ENCODE measurements at regions of chr2 and their contacts with region 1.

Region 1: GRCh38 chr2:84925724-84926376 is 20.4 kb downstream of the TMSB10 start:
- DNase-seq: peak; percentile 93 to 94
- H3K4me3 ChIP-seq: peak overlapping the region; percentile 53
- H3K4me3 Mint-ChIP-seq: peak overlapping the region; percentile 70
- H3K27ac Mint-ChIP-seq: no peak overlapping the region
- H3K4me1 ChIP-seq: peaks cover 8% of the 10 kb centered on the region; the same call in 1 of the 2 replicates
- H3K4me1 Mint-ChIP-seq: peaks cover 11% of the 10 kb centered on the region
- H3K27me3 ChIP-seq: no peaks in the 10 kb centered on the region
- H3K27me3 Mint-ChIP-seq: no peaks in the 10 kb centered on the region
- CTCF ChIP-seq: peak; percentile 80 to 97

Region 2: GRCh38 chr2:84495539-84496146 is 430.2 kb before region 1 on chr2:
- CTCF ChIA-PET with region 1: no interaction called
- POLR2A ChIA-PET with region 1: no interaction called
- intact Hi-C with region 1: loop called (anchors 1 kb)
- DNase-seq: peak in 1 of 2 experiments; percentile 54
- H3K4me3 ChIP-seq: no peak overlapping the region
- H3K4me3 Mint-ChIP-seq: no peak overlapping the region
- H3K27ac Mint-ChIP-seq: no peak overlapping the region
- H3K4me1 ChIP-seq: no peaks in the 10 kb centered on the region
- H3K4me1 Mint-ChIP-seq: peaks cover 5% of the 10 kb centered on the region
- H3K27me3 ChIP-seq: no peaks in the 10 kb centered on the region
- H3K27me3 Mint-ChIP-seq: no peaks in the 10 kb centered on the region
- CTCF ChIP-seq: peak; percentile 54 to 73

Region 3: DNA sequence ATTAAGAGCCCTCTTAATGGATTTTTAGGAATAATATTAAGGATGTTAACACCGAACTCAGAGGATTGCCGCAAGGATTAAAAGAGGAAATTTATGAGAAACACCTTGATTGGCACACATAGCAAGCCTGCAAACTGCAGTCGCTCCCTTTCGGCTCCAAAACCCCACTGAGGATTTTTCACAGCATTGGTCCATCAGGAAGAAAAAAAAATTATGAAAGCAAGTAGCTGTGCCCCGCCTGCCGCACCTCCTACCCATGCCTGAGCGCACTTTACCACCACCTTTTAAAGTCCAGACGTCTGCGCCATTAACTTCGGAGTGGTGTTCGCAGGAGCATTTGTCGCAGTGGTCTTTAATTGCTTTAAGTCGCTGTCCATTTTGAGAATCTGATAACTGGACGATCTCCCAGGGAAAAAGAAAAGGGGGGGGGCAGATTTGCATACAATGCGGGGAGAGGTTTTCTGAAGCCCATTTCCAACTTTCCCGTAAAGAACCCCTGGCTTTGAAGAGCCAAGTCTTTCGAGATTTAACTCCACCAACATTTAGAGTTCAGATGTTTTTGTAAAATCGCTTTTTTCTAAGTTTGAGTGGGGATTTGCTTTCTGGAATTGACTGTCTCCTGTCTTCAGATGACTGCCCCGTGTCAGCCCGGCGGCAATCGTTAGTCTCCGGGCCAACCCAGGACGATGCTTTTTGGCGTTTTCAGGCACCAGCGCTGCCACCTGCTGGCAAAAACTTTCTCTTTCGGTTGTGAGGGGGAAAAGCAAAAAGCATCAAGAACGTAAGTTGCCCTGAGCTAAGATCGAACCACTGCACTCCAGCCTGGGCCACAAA is 44.1 kb before region 1 on chr2:
- CTCF ChIA-PET with region 1: interaction called, 4 read pairs
- POLR2A ChIA-PET with region 1: no interaction called
- intact Hi-C with region 1: loop called (anchors 2 kb)
- DNase-seq: peak; percentile 80 to 84
- H3K4me3 ChIP-seq: peak overlapping the region; percentile 30
- H3K4me3 Mint-ChIP-seq: peak overlapping the region; percentile 81
- H3K27ac Mint-ChIP-seq: no peak overlapping the region
- H3K4me1 ChIP-seq: peaks cover 11% of the 10 kb centered on the region; the same call in 1 of the 2 replicates
- H3K4me1 Mint-ChIP-seq: peaks cover 7% of the 10 kb centered on the region
- H3K27me3 ChIP-seq: no peaks in the 10 kb centered on the region
- H3K27me3 Mint-ChIP-seq: peaks cover 22% of the 10 kb centered on the region
- CTCF ChIP-seq: peak; percentile 76 to 87

Region 4: DNA sequence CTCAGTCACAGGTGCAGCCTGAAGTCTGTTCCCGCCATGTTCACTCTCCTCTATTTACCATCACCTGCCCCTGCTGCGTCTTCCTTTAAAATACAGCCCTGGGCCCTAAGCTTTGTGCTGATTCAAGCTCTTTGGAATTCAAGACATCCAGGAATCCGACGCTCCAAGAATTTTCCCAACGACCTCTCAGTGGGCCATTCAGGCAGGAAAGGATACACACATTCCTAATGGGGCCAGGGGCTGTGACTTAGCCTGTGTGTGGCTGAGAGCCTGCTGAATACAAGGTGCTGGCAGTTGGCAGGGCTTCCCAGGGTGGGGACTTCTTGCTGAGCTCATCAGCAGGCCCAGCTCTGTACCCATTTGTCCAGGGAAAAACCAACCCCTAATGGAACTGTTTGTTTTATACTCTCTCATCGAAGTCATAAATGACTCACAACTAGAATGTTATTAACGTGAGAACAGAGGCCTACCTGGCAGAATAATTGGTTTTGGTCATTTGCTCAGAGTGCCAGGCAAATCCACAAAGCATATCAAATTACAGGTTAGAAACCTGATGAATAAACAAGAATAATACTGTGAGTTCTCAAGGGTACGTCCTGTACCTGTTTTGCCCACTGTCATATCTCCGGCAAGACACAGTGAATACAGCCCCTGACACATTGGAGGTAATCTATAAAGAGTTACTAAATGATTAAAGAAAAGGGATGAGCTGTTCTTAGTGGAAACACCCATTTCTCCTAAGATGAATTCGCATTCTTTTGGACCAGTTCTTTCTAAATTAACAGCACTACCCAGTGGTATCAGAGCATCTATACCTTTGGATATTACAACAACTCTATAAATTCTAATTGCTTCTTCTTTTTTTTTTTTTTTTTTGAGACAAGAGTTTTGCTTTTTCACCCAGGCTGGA is 32.5 kb after region 1 on chr2:
- CTCF ChIA-PET with region 1: interaction called, 3 read pairs
- POLR2A ChIA-PET with region 1: no interaction called
- intact Hi-C with region 1: loop called (anchors 2 kb)
- DNase-seq: peak; percentile 78 to 90
- H3K4me3 ChIP-seq: no peak overlapping the region
- H3K4me3 Mint-ChIP-seq: peak overlapping the region; percentile 61
- H3K27ac Mint-ChIP-seq: peak overlapping the region; percentile 95
- H3K4me1 ChIP-seq: peaks cover 40% of the 10 kb centered on the region
- H3K4me1 Mint-ChIP-seq: peaks cover 25% of the 10 kb centered on the region
- H3K27me3 ChIP-seq: no peaks in the 10 kb centered on the region
- H3K27me3 Mint-ChIP-seq: no peaks in the 10 kb centered on the region
- CTCF ChIP-seq: no peak

Region 5: DNA sequence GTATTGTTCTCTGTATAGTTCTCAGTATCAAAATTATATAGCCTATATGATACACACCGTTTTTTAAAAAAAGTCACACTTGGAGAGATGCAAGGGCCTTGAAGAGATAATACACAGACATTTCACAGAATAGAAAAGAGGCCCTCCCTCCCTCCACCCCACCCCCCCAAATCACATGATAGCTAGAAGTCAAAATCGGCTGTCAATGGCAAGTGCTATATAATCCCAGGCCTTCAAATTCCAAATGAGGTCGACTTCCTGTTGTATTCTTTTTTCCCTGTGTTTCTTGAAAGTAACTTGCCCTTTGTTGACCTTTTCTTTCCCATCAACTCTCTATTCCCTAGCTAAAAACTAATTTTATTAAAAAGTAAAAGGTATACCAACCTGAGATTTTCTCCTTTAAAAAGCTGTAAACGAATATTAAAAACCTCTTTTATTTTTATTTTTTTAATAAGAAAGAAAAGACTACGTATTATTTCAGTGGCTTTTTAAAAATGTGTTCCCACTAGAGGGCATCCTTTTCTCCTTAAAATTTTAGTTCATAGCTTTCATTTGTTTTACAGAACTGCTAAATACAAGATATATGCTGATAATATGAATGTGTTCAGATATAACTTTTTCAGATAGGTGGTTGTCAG is 91.7 kb after region 1 on chr2:
- CTCF ChIA-PET with region 1: interaction called, 16 read pairs
- POLR2A ChIA-PET with region 1: no interaction called
- intact Hi-C with region 1: loop called (anchors 1 kb)
- DNase-seq: no peak
- H3K4me3 ChIP-seq: no peak overlapping the region
- H3K4me3 Mint-ChIP-seq: no peak overlapping the region
- H3K27ac Mint-ChIP-seq: no peak overlapping the region
- H3K4me1 ChIP-seq: peaks cover 8% of the 10 kb centered on the region
- H3K4me1 Mint-ChIP-seq: peaks cover 20% of the 10 kb centered on the region
- H3K27me3 ChIP-seq: no peaks in the 10 kb centered on the region
- H3K27me3 Mint-ChIP-seq: no peaks in the 10 kb centered on the region
- CTCF ChIP-seq: peak in 1 of 2 experiments; percentile 10

Region 6: GRCh38 chr2:85302121-85302520 is 376.3 kb after region 1 on chr2:
- CTCF ChIA-PET with region 1: no interaction called
- POLR2A ChIA-PET with region 1: no interaction called
- intact Hi-C with region 1: loop called (anchors 2 kb)
- DNase-seq: no peak
- H3K4me3 ChIP-seq: no peak overlapping the region
- H3K4me3 Mint-ChIP-seq: no peak overlapping the region
- H3K27ac Mint-ChIP-seq: no peak overlapping the region
- H3K4me1 ChIP-seq: peaks cover 6% of the 10 kb centered on the region
- H3K4me1 Mint-ChIP-seq: peaks cover 9% of the 10 kb centered on the region
- H3K27me3 ChIP-seq: no peaks in the 10 kb centered on the region
- H3K27me3 Mint-ChIP-seq: no peaks in the 10 kb centered on the region
- CTCF ChIP-seq: no peak

Measured in Caco-2 (cell line).